MCF 10A (cell line): ENCODE measurements at regions of chr11 and their contacts with region 1.

Region 1: GRCh38 chr11:64652586-64653387 is 61.8 kb downstream of the SLC22A12 start:
- DNase-seq: peak; percentile 74
- H3K4me3 Mint-ChIP-seq: no peak overlapping the region
- H3K27ac Mint-ChIP-seq: no peak overlapping the region
- H3K4me1 Mint-ChIP-seq: no peaks in the 10 kb centered on the region
- H3K27me3 Mint-ChIP-seq: no peaks in the 10 kb centered on the region
- CTCF ChIP-seq: peak; percentile 97

Region 2: GRCh38 chr11:64489831-64490441 is 162.9 kb before region 1 on chr11:
- CTCF ChIA-PET with region 1: interaction called, 109 read pairs
- POLR2A ChIA-PET with region 1: no interaction called
- intact Hi-C with region 1: loop called (anchors 1 kb)
- DNase-seq: peak; percentile 60
- H3K4me3 Mint-ChIP-seq: no peak overlapping the region
- H3K27ac Mint-ChIP-seq: no peak overlapping the region
- H3K4me1 Mint-ChIP-seq: peaks cover 6% of the 10 kb centered on the region
- H3K27me3 Mint-ChIP-seq: peaks cover 75% of the 10 kb centered on the region
- CTCF ChIP-seq: peak; percentile 89

Region 3: DNA sequence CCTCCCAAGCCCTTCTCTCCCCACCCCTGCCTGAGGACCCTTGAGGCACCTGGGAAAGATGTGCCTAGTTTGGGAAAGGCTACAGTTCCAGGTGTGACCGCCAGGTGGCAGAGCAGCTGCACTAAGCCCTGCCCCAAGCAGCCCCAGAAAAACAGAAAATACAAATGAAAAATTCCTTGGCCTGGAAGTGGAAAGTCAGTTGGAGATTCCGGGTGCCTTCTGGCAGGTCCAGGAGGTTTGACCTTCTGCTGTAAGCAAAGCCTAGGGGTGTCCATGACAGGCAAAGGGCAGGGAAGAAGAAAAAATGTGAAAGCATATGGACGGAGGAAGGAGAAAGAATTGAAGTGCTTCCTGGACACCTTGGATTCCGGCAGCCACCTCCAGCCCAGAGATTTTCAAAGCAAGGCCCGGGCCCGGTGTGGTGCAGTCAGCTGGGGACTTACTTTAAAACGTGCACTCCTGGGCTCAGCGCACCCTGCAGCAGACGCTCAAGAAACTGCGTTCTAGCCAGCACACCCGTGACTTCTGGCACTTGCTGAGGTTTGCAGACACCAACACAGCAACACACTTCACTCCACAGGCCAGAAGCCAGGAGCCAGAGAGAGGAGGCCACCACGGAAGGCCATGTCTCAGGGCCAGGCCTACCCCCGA is 99.1 kb before region 1 on chr11:
- CTCF ChIA-PET with region 1: interaction called, 5 read pairs
- POLR2A ChIA-PET with region 1: no interaction called
- intact Hi-C with region 1: loop called (anchors 1 kb)
- DNase-seq: peak; percentile 47
- H3K4me3 Mint-ChIP-seq: no peak overlapping the region
- H3K27ac Mint-ChIP-seq: no peak overlapping the region
- H3K4me1 Mint-ChIP-seq: no peaks in the 10 kb centered on the region
- H3K27me3 Mint-ChIP-seq: peaks cover 3% of the 10 kb centered on the region
- CTCF ChIP-seq: peak; percentile 97

Region 4: GRCh38 chr11:64566042-64566914 is 86.5 kb before region 1 on chr11:
- CTCF ChIA-PET with region 1: interaction called, 15 read pairs
- POLR2A ChIA-PET with region 1: no interaction called
- intact Hi-C with region 1: no loop called
- DNase-seq: peak; percentile 94
- H3K4me3 Mint-ChIP-seq: peak overlapping the region; percentile 59
- H3K27ac Mint-ChIP-seq: peak overlapping the region; percentile 80
- H3K4me1 Mint-ChIP-seq: peaks cover 7% of the 10 kb centered on the region
- H3K27me3 Mint-ChIP-seq: no peaks in the 10 kb centered on the region
- CTCF ChIP-seq: no peak

Region 5: DNA sequence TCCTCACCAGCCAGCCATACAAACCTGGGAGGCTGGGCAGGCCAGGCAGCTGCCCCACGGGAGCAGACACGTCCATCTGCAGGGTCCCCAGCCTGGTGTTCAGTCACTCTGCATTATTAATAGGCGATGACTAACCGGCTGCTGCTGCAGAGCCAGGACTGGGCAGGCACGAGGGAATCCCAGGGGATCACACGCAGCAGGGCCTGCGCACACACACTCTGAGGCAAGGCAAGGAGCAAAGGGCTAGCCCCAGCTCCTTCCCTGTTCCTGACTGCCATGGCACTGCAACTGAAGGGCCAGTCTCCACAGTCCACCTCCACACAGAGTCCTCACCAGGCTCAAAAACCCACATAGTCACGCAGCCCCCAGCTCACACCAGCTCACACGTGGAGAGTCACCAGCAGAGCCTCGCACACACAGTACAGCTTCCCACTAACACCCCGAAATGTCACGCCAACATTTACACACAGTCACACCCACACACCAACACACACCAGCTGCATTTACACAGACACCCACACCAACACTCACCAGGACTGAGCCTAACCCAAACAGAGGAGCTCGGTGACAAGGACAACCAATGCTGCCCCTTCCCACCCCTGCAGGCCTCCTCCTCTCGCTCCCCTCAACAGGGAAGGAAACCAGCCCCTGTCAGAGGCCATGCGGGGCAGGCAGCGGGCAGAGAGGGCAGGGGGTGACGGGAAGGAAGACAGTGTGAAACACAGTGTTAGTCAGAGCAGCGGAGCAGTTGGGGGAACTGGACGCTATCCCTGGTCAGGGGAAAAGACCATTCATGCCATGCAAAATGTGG is 22.9 kb after region 1 on chr11:
- CTCF ChIA-PET with region 1: interaction called, 30 read pairs
- POLR2A ChIA-PET with region 1: no interaction called
- intact Hi-C with region 1: no loop called
- DNase-seq: peak; percentile 61
- H3K4me3 Mint-ChIP-seq: no peak overlapping the region
- H3K27ac Mint-ChIP-seq: no peak overlapping the region
- H3K4me1 Mint-ChIP-seq: peaks cover 6% of the 10 kb centered on the region
- H3K27me3 Mint-ChIP-seq: peaks cover 89% of the 10 kb centered on the region
- CTCF ChIP-seq: no peak

Region 6: GRCh38 chr11:64878494-64879243 is 225.9 kb after region 1 on chr11 and contains the start of gene EHD1:
- CTCF ChIA-PET with region 1: no interaction called
- POLR2A ChIA-PET with region 1: no interaction called
- intact Hi-C with region 1: no loop called
- DNase-seq: peak; percentile 98
- H3K4me3 Mint-ChIP-seq: peak within 1 kb of the TSS; percentile 95
- H3K27ac Mint-ChIP-seq: peak within 1 kb of the TSS; percentile 95
- H3K4me1 Mint-ChIP-seq: peaks cover 22% of the 10 kb centered on the region
- H3K27me3 Mint-ChIP-seq: no peaks in the 10 kb centered on the region
- CTCF ChIP-seq: peak; percentile 27
- total RNA-seq, gene EHD1: 67.9 and 80.6 TPM in 2 replicates